Ascending aorta (tissue), 2 donors: ENCODE measurements at regions of chr11 and their contacts with region 1.

Region 1: DNA sequence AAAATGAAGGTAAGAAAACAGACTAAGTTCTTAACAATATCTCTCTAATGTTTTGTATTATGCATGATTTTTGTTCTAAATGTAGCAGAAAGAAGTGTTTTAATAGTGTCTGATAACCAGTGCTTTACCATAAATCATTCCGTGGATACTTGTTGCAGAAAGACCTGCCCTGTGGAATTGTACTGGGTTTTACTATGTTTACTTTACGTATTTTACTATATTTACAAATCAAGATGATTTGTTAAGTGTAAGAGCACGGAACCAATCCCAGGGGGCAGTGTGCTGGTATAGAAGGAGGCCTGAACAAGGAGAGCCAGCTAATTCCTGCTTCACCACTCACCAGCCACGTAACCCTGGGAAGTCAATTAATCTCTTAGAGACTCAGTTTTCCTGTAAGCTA is 1.4 kb downstream of the HTR3B start:
- DNase-seq: no peak
- H3K4me3 ChIP-seq: no peak overlapping the region
- H3K27ac ChIP-seq: no peak overlapping the region
- H3K4me1 ChIP-seq: no peaks in the 10 kb centered on the region
- H3K27me3 ChIP-seq: no peaks in the 10 kb centered on the region
- CTCF ChIP-seq: no peak

Region 2: DNA sequence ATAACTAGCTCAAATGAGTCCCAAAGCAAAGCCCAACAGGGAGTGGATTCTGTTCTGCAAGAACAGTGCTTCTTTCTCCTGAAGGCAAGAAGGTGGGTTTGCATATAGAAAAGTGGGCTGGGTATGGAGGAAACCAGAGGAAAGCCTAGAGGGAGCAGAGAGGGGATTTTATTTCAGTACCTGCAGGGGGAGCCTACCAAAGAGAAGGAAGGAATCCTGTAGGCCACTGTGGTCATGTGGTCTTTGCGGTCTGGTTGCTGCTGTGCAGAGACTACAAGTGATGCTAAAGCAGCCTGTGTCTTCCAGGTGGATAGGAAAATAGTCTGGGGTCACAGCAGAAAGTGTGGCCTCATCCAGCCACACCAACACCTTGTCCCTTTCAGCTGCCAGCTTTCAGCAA is 120.3 kb after region 1 on chr11:
- intact Hi-C with region 1: loop called (anchors 10 kb)
- DNase-seq: no peak
- H3K4me3 ChIP-seq: no peak overlapping the region
- H3K27ac ChIP-seq: peak overlapping the region in 1 of 2 donors; percentile 45
- H3K4me1 ChIP-seq: peaks cover 4 to 13% of the 10 kb centered on the region in 2 donors
- H3K27me3 ChIP-seq: no peaks in the 10 kb centered on the region
- CTCF ChIP-seq: no peak